Cardiac septum (tissue), 1 donor: ENCODE measurements at regions of chr2 and their contacts with region 1.

Region 1: DNA sequence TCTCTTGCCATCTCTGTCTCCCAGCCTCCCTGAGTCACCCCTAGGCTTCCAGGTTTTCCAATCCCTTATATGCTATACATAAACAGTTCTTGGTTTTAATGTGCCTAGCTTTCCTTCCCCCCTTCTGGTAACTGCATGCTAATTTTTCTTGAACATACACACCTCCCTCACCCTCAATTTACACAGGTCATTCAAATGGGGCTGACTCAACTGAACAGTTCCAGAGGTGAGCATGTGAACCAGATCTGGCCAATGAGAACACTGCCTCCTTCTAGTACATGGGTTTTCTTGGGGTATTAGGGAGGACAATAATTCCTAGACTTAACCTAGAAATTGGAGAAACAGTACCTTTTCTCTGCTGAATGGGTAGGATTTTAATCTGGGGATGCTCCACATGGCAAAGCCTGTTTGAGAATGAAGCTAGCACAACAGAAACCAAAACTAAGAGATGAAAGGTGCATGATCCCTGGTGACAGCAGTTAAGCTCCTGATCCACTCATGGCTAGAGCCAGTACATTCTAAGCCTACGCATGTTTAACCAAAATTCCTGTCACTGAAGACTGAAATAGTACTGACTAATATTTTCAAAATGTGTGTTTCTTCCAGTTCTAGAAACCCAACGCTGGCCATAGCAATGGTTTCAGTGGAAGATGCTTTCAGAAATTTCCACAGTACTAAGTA is 11.8 kb downstream of the SLC25A12 start:
- DNase-seq: no peak

Region 2: DNA sequence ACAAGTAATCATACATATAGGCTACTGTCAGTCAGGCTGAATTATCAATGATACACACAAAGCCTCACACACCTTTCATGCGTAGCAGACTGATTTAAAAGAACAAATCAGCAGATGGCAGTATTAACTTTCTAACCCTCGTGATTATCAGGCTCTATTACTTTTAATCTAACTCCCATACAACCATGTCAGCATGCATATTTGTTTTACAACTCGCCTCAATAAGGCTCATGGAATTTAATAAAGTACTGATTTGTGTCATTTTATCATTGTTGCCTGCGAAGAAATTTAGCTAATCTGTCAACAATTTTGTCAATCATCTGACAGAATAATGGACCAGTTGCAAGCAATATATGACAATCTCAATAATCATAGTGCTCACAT is 71.0 kb before region 1 on chr2:
- intact Hi-C with region 1: loop called (anchors 10 kb)
- DNase-seq: no peak

Region 3: DNA sequence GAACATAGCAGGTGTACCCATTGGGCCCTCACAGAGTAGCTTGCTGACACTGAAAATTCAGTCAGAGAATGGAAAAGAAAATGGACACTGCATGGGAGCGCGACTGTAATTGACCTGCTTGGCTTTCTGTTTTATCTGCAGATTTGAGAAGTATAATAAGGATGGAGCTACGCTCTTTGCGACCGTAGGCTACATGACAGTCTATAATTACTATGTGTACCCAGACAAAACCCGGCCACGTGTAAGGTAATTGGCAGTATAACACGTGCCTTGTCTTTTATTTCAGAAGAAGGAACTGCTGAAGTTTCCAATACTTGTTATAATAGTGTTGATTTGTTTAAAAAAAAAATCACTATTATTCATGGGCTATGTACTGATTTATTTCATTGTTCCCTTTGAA is 84.0 kb after region 1 on chr2:
- intact Hi-C with region 1: no loop called
- DNase-seq: no peak